MCF 10A (cell line): ENCODE measurements at regions of chr1 and their contacts with region 1.

Region 1: GRCh38 chr1:225526878-225527277 is 99.0 kb upstream of the LBR start:
- DNase-seq: peak; percentile 56
- H3K4me3 Mint-ChIP-seq: no peak overlapping the region
- H3K27ac Mint-ChIP-seq: no peak overlapping the region
- H3K4me1 Mint-ChIP-seq: peaks cover 5% of the 10 kb centered on the region
- H3K27me3 Mint-ChIP-seq: no peaks in the 10 kb centered on the region
- CTCF ChIP-seq: no peak

Region 2: DNA sequence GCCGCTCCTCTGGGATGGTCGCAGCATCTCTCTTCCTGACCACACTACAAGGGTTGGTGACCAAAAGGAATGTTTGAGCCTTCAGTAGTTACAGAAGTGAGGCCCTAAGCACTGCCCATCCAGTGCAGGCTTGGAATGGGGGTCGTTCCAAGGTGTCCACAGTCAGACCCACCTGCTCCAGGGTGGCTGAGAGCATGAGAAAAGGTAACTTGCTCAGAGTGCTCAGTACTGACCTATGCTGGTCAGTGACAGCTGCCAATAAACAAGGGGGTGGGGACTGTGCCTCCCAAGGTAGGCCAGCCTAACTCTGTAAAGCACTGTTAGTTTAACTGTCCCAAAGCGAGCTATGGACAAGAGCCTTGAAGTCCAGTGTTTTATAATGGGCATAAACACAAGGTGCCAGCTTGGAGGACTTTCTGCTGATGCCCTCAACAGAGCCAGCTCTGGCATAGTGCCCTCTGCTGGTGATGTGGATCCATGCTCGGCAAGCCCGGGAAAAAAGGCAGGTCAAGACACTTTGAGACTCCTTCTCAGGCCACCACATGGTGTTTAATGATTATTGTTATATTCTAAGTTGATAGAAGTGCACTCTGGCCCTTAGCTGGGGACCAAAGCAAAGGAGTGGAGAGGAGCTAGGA is 675.5 kb before region 1 on chr1:
- CTCF ChIA-PET with region 1: no interaction called
- POLR2A ChIA-PET with region 1: no interaction called
- intact Hi-C with region 1: no loop called
- DNase-seq: peak; percentile 85
- H3K4me3 Mint-ChIP-seq: no peak overlapping the region
- H3K27ac Mint-ChIP-seq: no peak overlapping the region
- H3K4me1 Mint-ChIP-seq: peaks cover 6% of the 10 kb centered on the region
- H3K27me3 Mint-ChIP-seq: peaks cover 9% of the 10 kb centered on the region
- CTCF ChIP-seq: peak; percentile 98

Region 3: DNA sequence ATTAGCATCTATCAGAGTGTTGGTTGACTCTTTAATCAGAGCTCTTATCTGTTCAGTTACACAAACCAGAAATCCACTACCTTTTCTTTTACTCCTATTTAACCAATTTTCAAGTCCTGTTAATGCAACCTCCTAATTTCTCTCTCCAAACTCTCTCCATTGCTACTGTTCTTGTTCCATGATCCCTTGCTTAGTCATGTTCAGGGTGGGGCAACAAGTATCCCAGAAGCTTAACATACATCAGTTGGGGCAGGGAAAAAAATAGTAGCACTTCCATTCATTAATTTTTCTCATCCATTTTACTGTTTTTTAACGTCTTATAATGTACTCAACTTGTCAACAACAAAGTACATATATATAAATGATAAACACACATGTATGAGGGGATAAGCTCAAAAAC is 12.2 kb after region 1 on chr1:
- CTCF ChIA-PET with region 1: interaction called, 7 read pairs
- POLR2A ChIA-PET with region 1: interaction called, 20 read pairs
- intact Hi-C with region 1: no loop called
- DNase-seq: peak; percentile 50
- H3K4me3 Mint-ChIP-seq: no peak overlapping the region
- H3K27ac Mint-ChIP-seq: no peak overlapping the region
- H3K4me1 Mint-ChIP-seq: peaks cover 15% of the 10 kb centered on the region
- H3K27me3 Mint-ChIP-seq: no peaks in the 10 kb centered on the region
- CTCF ChIP-seq: no peak